A549 (cell line): ENCODE measurements at regions of chr12 and their contacts with region 1.

Region 1: GRCh38 chr12:3135522-3136461 is 58.6 kb downstream of the TSPAN9 start:
- DNase-seq: peak; percentile 83 to 89
- ATAC-seq: peak; percentile 84 to 92
- H3K4me3 ChIP-seq: no peak overlapping the region
- H3K27ac ChIP-seq: no peak overlapping the region; a peak in 1 of 6 replicates
- H3K4me1 ChIP-seq: peaks cover 11% of the 10 kb centered on the region; the same call in 1 of the 3 replicates
- CTCF ChIP-seq: peak; percentile 79
- EP300 ChIP-seq: no peak
- POLR2A ChIP-seq: no peak
- RAD21 ChIP-seq: peak; percentile 93

Region 2: DNA sequence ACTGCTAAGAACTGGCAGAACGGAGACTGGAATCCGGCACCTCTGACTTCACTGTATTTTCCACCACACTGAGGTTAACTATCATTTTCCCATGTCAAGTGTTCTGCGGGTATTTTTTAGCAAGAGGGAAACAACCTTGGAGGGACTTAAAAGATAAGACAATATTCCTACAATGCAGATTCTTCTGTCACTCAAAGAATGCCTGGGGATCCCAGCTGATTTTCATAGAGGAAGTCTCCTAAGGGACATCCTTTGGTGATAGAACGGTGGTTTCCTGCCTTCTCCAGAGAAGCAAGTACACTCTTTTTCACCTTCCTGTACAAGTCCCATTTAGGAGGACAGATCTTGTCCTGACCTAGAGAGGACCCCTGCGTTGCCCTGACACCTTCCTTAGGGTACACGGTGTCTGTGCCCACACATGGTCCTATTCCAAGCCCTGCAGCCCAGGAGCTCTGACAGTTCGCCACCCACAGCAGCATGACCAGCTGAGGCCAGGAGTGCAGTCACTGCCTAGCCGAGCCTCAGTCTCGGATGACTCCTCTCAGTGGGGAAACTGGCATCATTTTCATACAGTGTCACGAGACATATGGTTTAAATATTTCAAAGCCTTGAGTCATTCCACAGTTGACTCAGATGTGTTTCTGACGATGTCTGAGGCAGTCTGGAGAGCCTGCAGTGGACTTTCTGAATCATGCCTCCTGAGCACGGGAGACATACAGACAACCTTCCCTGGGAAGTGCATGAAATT is 522.3 kb before region 1 on chr12:
- CTCF ChIA-PET with region 1: no interaction called
- POLR2A ChIA-PET with region 1: no interaction called
- DNase-seq: peak; percentile 22 to 66
- ATAC-seq: peak; percentile 89 to 92
- H3K4me3 ChIP-seq: no peak overlapping the region
- H3K27ac ChIP-seq: peak overlapping the region; percentile 16 to 33; a peak in 3 of 6 replicates
- H3K4me1 ChIP-seq: peaks cover 11% of the 10 kb centered on the region
- CTCF ChIP-seq: no peak
- EP300 ChIP-seq: no peak
- POLR2A ChIP-seq: no peak
- RAD21 ChIP-seq: no peak

Region 3: GRCh38 chr12:3032770-3033538 is 102.8 kb before region 1 on chr12:
- CTCF ChIA-PET with region 1: no interaction called
- POLR2A ChIA-PET with region 1: no interaction called
- DNase-seq: no peak
- ATAC-seq: peak in 1 of 2 experiments; percentile 6; a peak in 2 of 6 replicates
- H3K4me3 ChIP-seq: no peak overlapping the region
- H3K27ac ChIP-seq: no peak overlapping the region
- H3K4me1 ChIP-seq: no peaks in the 10 kb centered on the region
- CTCF ChIP-seq: no peak
- EP300 ChIP-seq: no peak
- POLR2A ChIP-seq: no peak
- RAD21 ChIP-seq: no peak

Region 4: DNA sequence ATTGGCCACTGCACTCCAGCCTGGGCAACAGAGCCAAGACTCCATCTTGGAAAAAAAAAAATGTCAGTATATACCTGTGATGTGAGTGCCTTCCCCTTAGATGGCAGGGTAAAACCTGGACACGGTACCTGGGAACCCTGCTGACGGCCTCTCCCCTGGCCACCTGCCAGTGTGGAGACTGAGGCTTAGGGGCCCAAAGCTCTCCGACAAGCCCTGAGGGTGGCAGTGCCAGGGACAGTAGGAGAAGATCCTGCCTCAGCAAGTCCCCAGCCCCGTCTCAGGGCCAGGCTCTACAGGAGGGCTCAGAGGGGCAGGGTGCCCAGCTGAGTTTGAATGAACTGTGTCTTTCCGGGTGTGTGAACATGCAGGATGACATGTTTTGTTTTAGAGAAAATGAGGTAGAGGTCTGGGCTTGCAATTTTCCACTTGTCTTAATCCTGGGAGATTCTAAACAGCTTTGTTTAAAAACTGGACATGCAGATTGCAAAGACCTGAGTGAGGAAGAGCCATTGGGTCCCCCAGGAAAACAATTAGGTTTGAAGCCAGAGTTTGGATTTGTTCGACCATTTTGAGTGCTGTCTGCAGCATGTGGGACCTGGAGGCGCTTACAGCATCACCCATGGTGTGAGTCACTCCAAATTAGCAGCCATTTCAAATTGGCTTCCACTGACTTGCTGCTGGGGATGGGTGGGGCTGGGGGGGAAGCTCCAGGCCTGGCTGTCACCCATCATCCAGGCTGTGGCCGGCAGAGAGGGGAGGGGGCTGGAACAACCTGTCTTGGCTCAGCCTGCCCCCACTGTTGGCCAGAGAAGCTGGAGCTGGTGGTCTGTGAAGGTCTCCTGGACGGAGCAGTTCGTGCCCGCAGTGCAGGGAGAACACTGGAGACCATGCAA is 47.8 kb before region 1 on chr12:
- CTCF ChIA-PET with region 1: interaction called, 11 read pairs
- POLR2A ChIA-PET with region 1: no interaction called
- DNase-seq: no peak
- ATAC-seq: no peak
- H3K4me3 ChIP-seq: no peak overlapping the region
- H3K27ac ChIP-seq: no peak overlapping the region
- H3K4me1 ChIP-seq: no peaks in the 10 kb centered on the region
- CTCF ChIP-seq: no peak
- EP300 ChIP-seq: no peak
- POLR2A ChIP-seq: no peak
- RAD21 ChIP-seq: no peak

Region 5: GRCh38 chr12:3150931-3151835 is 15.4 kb after region 1 on chr12:
- CTCF ChIA-PET with region 1: interaction called, 125 read pairs
- POLR2A ChIA-PET with region 1: no interaction called
- DNase-seq: no peak
- ATAC-seq: no peak
- H3K4me3 ChIP-seq: no peak overlapping the region
- H3K27ac ChIP-seq: no peak overlapping the region
- H3K4me1 ChIP-seq: no peaks in the 10 kb centered on the region
- CTCF ChIP-seq: no peak
- EP300 ChIP-seq: no peak
- POLR2A ChIP-seq: no peak
- RAD21 ChIP-seq: no peak

Region 6: DNA sequence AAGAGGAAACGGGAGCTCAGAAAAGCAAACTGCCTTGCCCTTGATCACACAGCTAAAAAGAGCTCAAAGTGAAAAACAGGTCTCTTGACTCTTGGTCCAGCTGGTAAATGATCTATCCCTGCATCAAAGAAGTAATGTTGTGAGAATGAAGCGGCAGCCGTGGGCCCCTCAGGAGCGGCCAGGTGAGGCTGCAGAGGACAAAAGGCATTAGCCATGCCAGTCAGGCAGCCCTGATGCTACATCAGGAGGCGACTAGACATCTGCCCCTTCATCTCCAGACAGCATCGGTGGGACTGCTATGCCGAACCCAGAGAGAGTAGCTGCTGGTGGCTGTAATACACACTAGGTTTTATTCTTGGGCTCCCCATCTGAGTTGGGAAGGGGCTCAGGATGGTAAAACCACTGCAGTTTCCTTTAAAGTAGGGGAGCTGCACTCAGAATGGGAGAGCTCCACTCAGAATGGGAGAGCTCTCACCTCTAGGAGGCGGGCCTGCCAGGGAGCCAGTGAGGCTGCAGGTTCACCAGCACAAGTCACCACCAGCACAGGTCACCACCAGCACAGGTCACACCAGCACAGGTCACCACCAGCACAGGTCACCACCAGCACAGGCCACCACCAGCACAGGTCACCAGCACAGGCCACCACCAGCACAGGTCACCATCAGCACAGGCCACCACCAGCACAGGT is 61.5 kb after region 1 on chr12:
- CTCF ChIA-PET with region 1: interaction called, 68 read pairs
- POLR2A ChIA-PET with region 1: no interaction called
- DNase-seq: no peak
- ATAC-seq: no peak
- H3K4me3 ChIP-seq: no peak overlapping the region
- H3K27ac ChIP-seq: no peak overlapping the region
- H3K4me1 ChIP-seq: peaks cover 4% of the 10 kb centered on the region; the same call in 1 of the 3 replicates
- CTCF ChIP-seq: no peak
- EP300 ChIP-seq: no peak
- POLR2A ChIP-seq: no peak
- RAD21 ChIP-seq: no peak

Region 7: DNA sequence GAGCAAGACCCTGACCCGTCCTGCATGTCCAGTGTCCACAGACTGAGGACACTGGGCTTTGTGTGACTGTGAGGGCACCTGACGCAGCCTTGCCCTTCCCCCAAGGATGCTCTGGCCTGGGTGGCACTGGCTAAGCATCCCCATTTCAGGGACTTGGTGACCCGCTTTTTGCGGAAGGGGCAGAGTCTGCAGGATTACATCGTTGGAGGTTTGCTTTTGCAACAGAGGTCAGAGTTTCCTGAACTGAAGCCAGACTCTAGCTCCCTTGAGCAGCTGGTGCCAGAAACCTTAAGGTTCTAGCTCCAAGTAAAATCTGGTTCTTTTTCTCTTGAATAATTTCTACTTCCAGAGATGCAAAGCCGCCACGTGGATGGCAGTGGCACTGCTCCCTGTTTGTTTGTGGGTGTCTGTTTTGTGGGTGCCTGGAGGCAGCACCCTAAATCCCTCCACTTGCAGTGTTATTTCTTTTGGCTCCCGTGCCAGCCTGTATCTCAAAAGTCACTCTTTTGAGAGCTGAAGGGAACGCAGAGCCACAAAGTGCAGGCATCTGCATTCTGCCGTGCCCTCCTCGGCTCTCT is 126.1 kb after region 1 on chr12:
- CTCF ChIA-PET with region 1: interaction called, 13 read pairs
- POLR2A ChIA-PET with region 1: no interaction called
- DNase-seq: no peak
- ATAC-seq: no peak
- H3K4me3 ChIP-seq: no peak overlapping the region
- H3K27ac ChIP-seq: no peak overlapping the region
- H3K4me1 ChIP-seq: no peaks in the 10 kb centered on the region
- CTCF ChIP-seq: no peak
- EP300 ChIP-seq: no peak
- POLR2A ChIP-seq: no peak
- RAD21 ChIP-seq: no peak

Region 8: GRCh38 chr12:3332188-3332587 is 196.4 kb after region 1 on chr12:
- CTCF ChIA-PET with region 1: no interaction called
- POLR2A ChIA-PET with region 1: no interaction called
- DNase-seq: no peak
- ATAC-seq: no peak
- H3K4me3 ChIP-seq: no peak overlapping the region
- H3K27ac ChIP-seq: no peak overlapping the region
- H3K4me1 ChIP-seq: no peaks in the 10 kb centered on the region
- CTCF ChIP-seq: no peak
- EP300 ChIP-seq: no peak
- POLR2A ChIP-seq: no peak
- RAD21 ChIP-seq: no peak